Activated T-helper 2 cell treated with anti-CD3 and anti-CD28 coated beads, Interferon-gamma antibody, Interleukin-2, Interleukin-4, amounts not matched to agents 10 μg/mL and 5 μg/mL and 100 μg/mL, durations not matched to agents 14 hours and 24 hours and 36 hours (primary cell): ENCODE measurements at regions of chr5 and their contacts with region 1.

Region 1: GRCh38 chr5:93915142-93915553 is 173.7 kb upstream of the POU5F2 start:
- DNase-seq: no peak
- H3K4me3 Mint-ChIP-seq: no peak overlapping the region
- H3K27ac Mint-ChIP-seq: no peak overlapping the region
- H3K4me1 Mint-ChIP-seq: no peaks in the 10 kb centered on the region
- H3K27me3 Mint-ChIP-seq: no peaks in the 10 kb centered on the region

Region 2: GRCh38 chr5:93800988-93801811 is 113.9 kb before region 1 on chr5:
- intact Hi-C with region 1: loop called (anchors 5 kb)
- DNase-seq: no peak
- H3K4me3 Mint-ChIP-seq: no peak overlapping the region
- H3K27ac Mint-ChIP-seq: no peak overlapping the region
- H3K4me1 Mint-ChIP-seq: peaks cover 2% of the 10 kb centered on the region
- H3K27me3 Mint-ChIP-seq: no peaks in the 10 kb centered on the region

Region 3: GRCh38 chr5:94111209-94112004 is 196.3 kb after region 1 on chr5:
- intact Hi-C with region 1: no loop called
- DNase-seq: peak; percentile 89
- H3K4me3 Mint-ChIP-seq: peak overlapping the region; percentile 92
- H3K27ac Mint-ChIP-seq: peak overlapping the region; percentile 90
- H3K4me1 Mint-ChIP-seq: peaks cover 21% of the 10 kb centered on the region
- H3K27me3 Mint-ChIP-seq: peaks cover 8% of the 10 kb centered on the region